ENCODE measurements at regions of chr1 and their contacts with region 1.

Region 1: DNA sequence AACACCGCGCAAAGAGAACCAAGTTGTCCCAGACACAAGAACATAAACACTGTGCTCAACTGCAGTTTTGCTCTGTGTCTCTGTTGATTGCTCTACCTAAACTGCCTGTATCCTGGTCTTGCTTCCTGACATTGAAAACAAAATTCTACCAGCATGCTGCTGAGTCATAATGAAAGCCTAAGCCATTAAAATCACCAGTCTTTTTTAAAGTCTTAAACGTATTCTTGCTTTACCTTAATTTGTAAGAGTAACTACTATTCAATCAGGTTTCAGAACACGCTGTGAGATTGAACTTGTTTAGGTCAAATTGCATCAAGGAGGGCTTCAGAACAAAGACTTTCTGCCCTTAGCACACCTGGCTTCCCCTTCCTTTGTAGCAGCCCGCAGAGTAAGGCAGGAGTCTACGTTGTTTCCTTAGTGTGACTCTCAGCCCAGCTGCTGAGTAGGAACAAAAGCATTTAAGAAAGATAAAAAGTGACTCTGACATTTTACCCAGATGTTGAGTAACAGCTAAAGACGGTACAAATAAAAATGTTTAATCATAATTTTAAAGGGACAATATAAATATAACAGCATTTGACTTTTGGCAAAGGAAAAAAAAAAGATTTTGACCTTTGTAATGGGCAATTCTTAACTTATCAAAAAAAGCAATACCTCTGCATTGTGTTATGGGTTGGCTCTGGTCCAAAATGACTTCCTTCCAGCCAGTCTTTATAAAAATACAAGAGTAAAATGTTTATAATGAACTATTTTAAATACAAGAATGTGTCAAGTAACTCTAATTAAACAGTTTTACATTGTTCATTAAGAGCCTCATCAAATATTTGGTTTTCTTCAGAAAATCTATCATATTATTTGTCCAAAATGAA is 186.9 kb upstream of the ADGRL4 start:
- DNase-seq: peak; percentile 84
- ATAC-seq: peak; percentile 89
- H3K4me3 ChIP-seq: peak overlapping the region; percentile 57
- H3K27ac ChIP-seq: peak overlapping the region; percentile 84
- H3K4me1 ChIP-seq: peaks cover 31% of the 10 kb centered on the region
- H3K27me3 ChIP-seq: no peaks in the 10 kb centered on the region
- CTCF ChIP-seq: no peak

Region 2: GRCh38 chr1:78617615-78618026 is 575.8 kb before region 1 on chr1:
- CTCF ChIA-PET with region 1: no interaction called
- POLR2A ChIA-PET with region 1: no interaction called
- intact Hi-C with region 1: loop called (anchors 1 kb)
- DNase-seq: peak; percentile 91
- ATAC-seq: peak; percentile 59
- H3K4me3 ChIP-seq: no peak overlapping the region
- H3K27ac ChIP-seq: no peak overlapping the region
- H3K4me1 ChIP-seq: peaks cover 24% of the 10 kb centered on the region
- H3K27me3 ChIP-seq: no peaks in the 10 kb centered on the region
- CTCF ChIP-seq: peak; percentile 90

Region 3: DNA sequence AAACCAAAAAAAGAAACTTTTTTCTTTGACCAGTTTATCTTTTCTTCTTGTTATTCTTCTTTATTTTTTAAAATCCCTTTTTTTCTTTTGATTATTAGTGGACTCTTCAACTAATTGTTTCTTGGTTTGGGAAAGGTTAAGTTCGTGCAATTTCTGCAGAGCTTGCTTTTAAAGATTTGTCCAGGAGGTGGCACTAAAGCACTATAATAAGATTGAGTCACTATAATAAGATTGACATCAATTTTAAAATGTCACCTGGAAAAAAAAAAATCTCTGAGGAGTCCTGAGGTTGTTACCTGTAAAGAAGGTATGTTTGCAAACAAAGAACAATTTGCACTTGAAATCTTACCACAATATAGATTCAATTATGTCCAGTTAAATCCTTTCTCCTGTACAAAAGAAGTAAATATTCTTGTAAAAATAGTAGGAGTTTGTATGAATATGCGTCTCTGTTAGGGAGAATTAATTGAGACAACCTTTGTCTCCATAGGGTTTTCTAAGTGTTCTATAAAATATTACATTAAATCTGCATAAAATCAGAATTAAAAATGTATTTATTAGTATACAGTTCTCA is 353.7 kb before region 1 on chr1:
- CTCF ChIA-PET with region 1: interaction called, 5 read pairs
- POLR2A ChIA-PET with region 1: no interaction called
- intact Hi-C with region 1: loop called (anchors 1 kb)
- DNase-seq: peak; percentile 85
- ATAC-seq: 0 out of 2 replicates have a peak, but pooled peaks have one; percentile 12
- H3K4me3 ChIP-seq: no peak overlapping the region
- H3K27ac ChIP-seq: no peak overlapping the region
- H3K4me1 ChIP-seq: peaks cover 14% of the 10 kb centered on the region
- H3K27me3 ChIP-seq: no peaks in the 10 kb centered on the region
- CTCF ChIP-seq: peak; percentile 79

Region 4: GRCh38 chr1:79079770-79080169 is 113.7 kb before region 1 on chr1:
- CTCF ChIA-PET with region 1: no interaction called
- POLR2A ChIA-PET with region 1: no interaction called
- intact Hi-C with region 1: loop called (anchors 1 kb)
- DNase-seq: peak; percentile 90
- ATAC-seq: peak; percentile 91
- H3K4me3 ChIP-seq: no peak overlapping the region
- H3K27ac ChIP-seq: peak overlapping the region; percentile 21
- H3K4me1 ChIP-seq: peaks cover 16% of the 10 kb centered on the region
- H3K27me3 ChIP-seq: no peaks in the 10 kb centered on the region
- CTCF ChIP-seq: no peak

Region 5: DNA sequence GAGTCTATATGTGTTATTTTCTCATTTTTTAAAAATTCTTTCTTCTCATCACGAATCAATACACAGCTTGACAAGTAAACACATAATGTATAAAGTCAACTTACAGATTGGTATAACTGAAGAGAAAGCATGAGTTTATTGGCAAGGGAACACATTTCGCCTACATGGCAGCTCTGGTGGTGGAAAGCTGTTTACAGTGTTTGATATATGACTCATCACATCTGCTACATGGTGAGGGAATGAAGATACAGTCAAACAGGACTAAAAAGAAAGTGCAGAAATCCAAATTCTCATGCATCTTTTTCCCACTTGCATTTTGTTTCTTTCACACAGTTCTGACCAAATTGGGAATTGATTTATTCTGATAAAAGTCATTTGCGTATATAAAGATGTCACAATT is 64.7 kb before region 1 on chr1:
- CTCF ChIA-PET with region 1: no interaction called
- POLR2A ChIA-PET with region 1: no interaction called
- intact Hi-C with region 1: loop called (anchors 2 kb)
- DNase-seq: peak; percentile 83
- ATAC-seq: peak; percentile 99
- H3K4me3 ChIP-seq: no peak overlapping the region
- H3K27ac ChIP-seq: peak overlapping the region; percentile 58
- H3K4me1 ChIP-seq: peaks cover 16% of the 10 kb centered on the region
- H3K27me3 ChIP-seq: no peaks in the 10 kb centered on the region
- CTCF ChIP-seq: no peak

Region 6: DNA sequence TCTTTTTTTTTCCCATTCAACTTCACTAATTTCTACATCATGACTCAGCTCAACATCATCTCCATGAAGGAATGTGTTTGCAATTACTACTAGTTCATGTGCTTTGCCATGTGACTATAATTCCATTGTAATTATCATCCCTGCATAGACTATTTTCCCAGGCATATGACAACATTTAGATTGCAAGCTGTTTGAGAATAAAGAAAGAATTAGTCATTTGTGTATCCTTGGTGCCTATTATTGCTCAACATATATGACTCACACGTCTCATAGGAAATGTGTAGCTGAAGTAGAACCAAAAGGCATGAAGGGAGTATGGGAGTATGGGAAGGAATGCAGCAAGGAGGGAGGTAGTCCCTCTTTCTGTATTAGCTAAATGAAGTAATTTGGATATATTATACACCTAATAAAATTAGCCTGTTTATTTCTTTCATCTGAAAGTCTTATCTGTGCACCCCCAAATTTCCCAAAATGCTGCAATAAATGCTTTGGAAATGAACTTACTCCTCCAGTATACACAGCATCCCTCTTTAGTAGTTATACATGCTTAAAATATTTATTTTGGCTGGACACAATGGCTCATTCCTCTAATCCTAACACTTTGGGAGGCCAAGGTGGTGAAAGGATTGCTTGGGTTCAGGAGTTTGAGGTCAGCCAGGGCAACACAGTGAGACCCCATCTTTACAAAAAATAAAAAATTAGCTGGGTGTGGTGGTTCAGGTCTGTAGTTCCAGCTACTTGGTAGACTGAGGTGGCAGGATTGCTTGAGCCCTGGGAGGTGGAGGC is 130.0 kb after region 1 on chr1:
- CTCF ChIA-PET with region 1: no interaction called
- POLR2A ChIA-PET with region 1: no interaction called
- intact Hi-C with region 1: no loop called
- DNase-seq: peak; percentile 95
- ATAC-seq: peak; percentile 93
- H3K4me3 ChIP-seq: no peak overlapping the region
- H3K27ac ChIP-seq: peak overlapping the region; percentile 79
- H3K4me1 ChIP-seq: peaks cover 20% of the 10 kb centered on the region
- H3K27me3 ChIP-seq: no peaks in the 10 kb centered on the region
- CTCF ChIP-seq: no peak

Region 7: DNA sequence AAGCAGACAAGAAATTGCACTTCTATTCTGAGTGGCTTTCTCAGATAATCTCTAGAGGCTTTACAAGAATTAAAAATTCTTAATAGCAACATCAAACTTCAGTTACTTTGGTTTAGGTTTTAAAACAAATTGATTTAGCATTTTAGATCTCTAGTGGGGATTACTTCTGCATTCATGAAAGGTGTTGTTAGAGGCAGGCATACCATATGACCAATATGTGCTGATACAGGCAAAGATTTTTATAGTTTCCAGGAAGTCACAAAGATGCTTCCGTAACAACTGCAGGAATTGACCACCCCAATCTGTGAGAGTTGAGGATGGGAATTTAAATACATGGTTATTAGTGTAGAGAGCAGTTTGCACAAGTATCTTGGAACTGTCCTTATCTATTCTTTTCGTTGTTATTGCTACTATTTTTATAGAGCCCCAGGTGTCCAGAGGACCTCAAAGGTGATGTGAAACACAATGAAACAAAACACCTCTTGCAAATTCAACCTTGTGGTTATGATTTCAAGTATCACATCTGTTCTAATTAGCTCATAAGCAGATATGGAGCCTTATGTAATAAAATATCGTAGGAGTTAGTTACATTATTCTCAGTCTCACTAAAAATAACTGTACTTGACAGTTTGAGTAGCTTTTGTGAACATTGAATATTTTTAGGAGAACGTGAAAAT is 325.8 kb after region 1 on chr1:
- CTCF ChIA-PET with region 1: no interaction called
- POLR2A ChIA-PET with region 1: no interaction called
- intact Hi-C with region 1: no loop called
- DNase-seq: no peak
- ATAC-seq: no peak
- H3K4me3 ChIP-seq: no peak overlapping the region
- H3K27ac ChIP-seq: no peak overlapping the region
- H3K4me1 ChIP-seq: no peaks in the 10 kb centered on the region
- H3K27me3 ChIP-seq: no peaks in the 10 kb centered on the region
- CTCF ChIP-seq: no peak

Region 8: DNA sequence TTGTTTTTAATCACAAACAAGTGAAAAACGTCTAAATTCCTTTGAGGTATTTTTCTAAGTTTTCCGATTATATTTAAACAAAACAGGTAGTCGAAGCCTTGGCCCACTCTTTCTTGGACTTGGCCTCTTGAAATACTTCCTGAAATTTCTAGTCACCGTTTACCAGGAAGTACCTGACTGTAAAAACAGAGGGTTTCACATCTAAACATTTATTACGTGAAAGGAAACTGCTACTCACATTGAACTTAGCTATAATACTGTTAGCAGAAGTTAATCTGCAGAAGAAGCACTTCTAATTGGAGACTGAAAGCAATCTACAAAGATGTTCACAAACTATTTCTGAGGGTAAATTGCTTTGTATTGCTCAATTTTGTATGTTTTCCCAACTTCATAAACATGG is 339.1 kb after region 1 on chr1:
- CTCF ChIA-PET with region 1: no interaction called
- POLR2A ChIA-PET with region 1: no interaction called
- intact Hi-C with region 1: no loop called
- DNase-seq: no peak
- ATAC-seq: no peak
- H3K4me3 ChIP-seq: no peak overlapping the region
- H3K27ac ChIP-seq: no peak overlapping the region
- H3K4me1 ChIP-seq: no peaks in the 10 kb centered on the region
- H3K27me3 ChIP-seq: no peaks in the 10 kb centered on the region
- CTCF ChIP-seq: no peak